B cell (primary cell): ENCODE measurements at regions of chr19 and their contacts with region 1.

Region 1: GRCh38 chr19:10461047-10461790 is 40.9 kb downstream of the PDE4A start:
- DNase-seq: peak; percentile 89
- ATAC-seq: peak; percentile 90
- H3K4me3 ChIP-seq: peak overlapping the region; percentile 25 to 62 (median 48)
- H3K4me3 Mint-ChIP-seq: peak overlapping the region; percentile 70
- H3K27ac ChIP-seq: no peak overlapping the region
- H3K27ac Mint-ChIP-seq: no peak overlapping the region
- H3K4me1 ChIP-seq: peaks cover 7 to 8% of the 10 kb centered on the region in 2 donors
- H3K4me1 Mint-ChIP-seq: peaks cover 11% of the 10 kb centered on the region
- H3K27me3 ChIP-seq: no peaks in the 10 kb centered on the region
- H3K27me3 Mint-ChIP-seq: no peaks in the 10 kb centered on the region
- CTCF ChIP-seq: no peak

Region 2: DNA sequence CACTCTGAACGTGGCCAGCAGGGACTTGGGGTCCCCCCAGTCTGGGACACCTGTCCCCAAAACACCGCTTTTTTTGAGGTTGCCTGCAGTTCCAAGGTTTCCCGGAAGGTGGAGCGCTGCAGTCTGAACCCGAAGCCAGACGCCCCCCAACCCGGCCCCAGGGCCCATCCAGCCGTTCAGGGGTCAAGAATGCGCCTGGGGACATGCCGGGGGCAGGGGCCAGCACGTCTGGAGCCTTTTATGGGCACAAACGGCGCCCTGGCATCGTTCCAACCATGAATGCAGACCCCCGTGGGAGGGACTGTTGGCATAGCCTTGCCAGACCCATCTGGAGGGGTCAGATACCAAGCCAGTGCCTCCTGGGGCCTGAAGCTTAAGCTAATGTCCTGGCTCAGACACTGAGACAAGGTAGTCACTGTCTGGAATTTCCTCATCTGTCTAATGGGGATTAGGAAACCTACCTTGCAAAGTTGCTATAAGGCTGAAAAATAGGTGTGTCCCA is 49.1 kb after region 1 on chr19:
- CTCF ChIA-PET with region 1: interaction called, 3 read pairs
- POLR2A ChIA-PET with region 1: interaction called, 11 read pairs
- intact Hi-C with region 1: no loop called
- DNase-seq: peak; percentile 71
- ATAC-seq: peak; percentile 44
- H3K4me3 ChIP-seq: no peak overlapping the region
- H3K4me3 Mint-ChIP-seq: no peak overlapping the region
- H3K27ac ChIP-seq: no peak overlapping the region
- H3K27ac Mint-ChIP-seq: no peak overlapping the region
- H3K4me1 ChIP-seq: peaks cover 16 to 17% of the 10 kb centered on the region in 2 donors
- H3K4me1 Mint-ChIP-seq: peaks cover 15% of the 10 kb centered on the region
- H3K27me3 ChIP-seq: peaks cover 0 to 43% (median 20%) of the 10 kb centered on the region in 4 experiments
- H3K27me3 Mint-ChIP-seq: peaks cover 19% of the 10 kb centered on the region
- CTCF ChIP-seq: peak; percentile 91

Region 3: GRCh38 chr19:10532457-10532856 is 71.2 kb after region 1 on chr19:
- CTCF ChIA-PET with region 1: no interaction called
- POLR2A ChIA-PET with region 1: no interaction called
- intact Hi-C with region 1: no loop called
- DNase-seq: no peak
- ATAC-seq: no peak
- H3K4me3 ChIP-seq: no peak overlapping the region
- H3K4me3 Mint-ChIP-seq: no peak overlapping the region
- H3K27ac ChIP-seq: no peak overlapping the region
- H3K27ac Mint-ChIP-seq: no peak overlapping the region
- H3K4me1 ChIP-seq: no peaks in the 10 kb centered on the region
- H3K4me1 Mint-ChIP-seq: no peaks in the 10 kb centered on the region
- H3K27me3 ChIP-seq: peaks cover 0 to 4% (median 1%) of the 10 kb centered on the region in 4 experiments
- H3K27me3 Mint-ChIP-seq: peaks cover 7% of the 10 kb centered on the region
- CTCF ChIP-seq: no peak

Region 4: GRCh38 chr19:10580979-10581631 is 119.9 kb after region 1 on chr19:
- CTCF ChIA-PET with region 1: no interaction called
- POLR2A ChIA-PET with region 1: no interaction called
- intact Hi-C with region 1: no loop called
- DNase-seq: peak; percentile 93
- ATAC-seq: peak; percentile 99
- H3K4me3 ChIP-seq: peak overlapping the region in 1 of 5 experiments; percentile 2
- H3K4me3 Mint-ChIP-seq: peak overlapping the region; percentile 30
- H3K27ac ChIP-seq: no peak overlapping the region
- H3K27ac Mint-ChIP-seq: peak overlapping the region; percentile 16
- H3K4me1 ChIP-seq: peaks cover 4 to 8% of the 10 kb centered on the region in 2 donors
- H3K4me1 Mint-ChIP-seq: peaks cover 16% of the 10 kb centered on the region
- H3K27me3 ChIP-seq: no peaks in the 10 kb centered on the region
- H3K27me3 Mint-ChIP-seq: no peaks in the 10 kb centered on the region
- CTCF ChIP-seq: peak; percentile 98

Region 5: GRCh38 chr19:10742476-10742875 is 281.3 kb after region 1 on chr19:
- CTCF ChIA-PET with region 1: no interaction called
- POLR2A ChIA-PET with region 1: no interaction called
- intact Hi-C with region 1: no loop called
- DNase-seq: no peak
- ATAC-seq: no peak
- H3K4me3 ChIP-seq: no peak overlapping the region
- H3K4me3 Mint-ChIP-seq: peak overlapping the region; percentile 39
- H3K27ac ChIP-seq: peak overlapping the region in 1 of 2 donors; percentile 15
- H3K27ac Mint-ChIP-seq: peak overlapping the region; percentile 34
- H3K4me1 ChIP-seq: peaks cover 36 to 62% of the 10 kb centered on the region in 2 donors
- H3K4me1 Mint-ChIP-seq: peaks cover 62% of the 10 kb centered on the region
- H3K27me3 ChIP-seq: no peaks in the 10 kb centered on the region
- H3K27me3 Mint-ChIP-seq: no peaks in the 10 kb centered on the region
- CTCF ChIP-seq: no peak